HCT116 (cell line): ENCODE measurements at regions of chr1 and their contacts with region 1.

Region 1: DNA sequence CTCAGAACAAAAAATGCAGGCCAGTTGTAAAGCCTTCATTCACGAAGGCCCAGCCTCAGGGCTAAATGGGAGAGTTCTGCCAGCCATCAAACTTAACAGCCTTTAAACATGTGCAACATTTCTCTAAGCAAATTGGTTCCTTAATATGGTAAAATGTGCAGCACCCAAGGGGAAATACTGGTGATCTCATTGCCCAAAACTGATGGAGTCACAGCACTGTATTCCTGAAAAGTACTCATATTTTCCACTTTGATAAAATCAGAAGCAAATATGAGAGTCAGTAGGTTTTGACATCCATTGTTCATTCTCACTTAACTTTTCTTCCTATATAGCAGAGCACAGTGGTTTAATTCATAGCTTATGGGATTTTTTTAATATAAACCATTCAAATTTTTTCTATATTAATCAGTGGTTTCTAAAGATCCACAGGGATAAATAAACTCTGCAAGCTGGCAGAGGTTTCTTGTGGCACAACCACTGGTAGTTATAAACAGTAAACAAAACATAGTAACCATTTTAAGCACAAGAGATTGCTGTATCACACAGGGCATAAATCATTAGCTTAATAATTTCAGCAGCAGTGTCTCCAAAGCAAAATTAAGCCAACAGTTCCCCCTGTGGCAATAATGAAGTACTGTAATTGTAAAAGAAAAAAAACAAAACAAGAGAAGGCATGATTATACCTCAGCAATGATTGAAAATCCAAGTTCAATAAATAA is 106.9 kb upstream of the LYPLAL1 start:
- DNase-seq: peak; percentile 33
- ATAC-seq: peak; percentile 77
- H3K4me3 ChIP-seq: no peak overlapping the region
- H3K27ac ChIP-seq: no peak overlapping the region
- H3K4me1 ChIP-seq: peaks cover 0 to 8% of the 10 kb centered on the region in 2 experiments; a peak in 1 of 4 replicates
- H3K27me3 ChIP-seq: no peaks in the 10 kb centered on the region
- CTCF ChIP-seq: peak; percentile 38 to 66 (median 60); a peak in 4 of 6 replicates
- POLR2A ChIP-seq: no peak
- RAD21 ChIP-seq: peak; percentile 77

Region 2: DNA sequence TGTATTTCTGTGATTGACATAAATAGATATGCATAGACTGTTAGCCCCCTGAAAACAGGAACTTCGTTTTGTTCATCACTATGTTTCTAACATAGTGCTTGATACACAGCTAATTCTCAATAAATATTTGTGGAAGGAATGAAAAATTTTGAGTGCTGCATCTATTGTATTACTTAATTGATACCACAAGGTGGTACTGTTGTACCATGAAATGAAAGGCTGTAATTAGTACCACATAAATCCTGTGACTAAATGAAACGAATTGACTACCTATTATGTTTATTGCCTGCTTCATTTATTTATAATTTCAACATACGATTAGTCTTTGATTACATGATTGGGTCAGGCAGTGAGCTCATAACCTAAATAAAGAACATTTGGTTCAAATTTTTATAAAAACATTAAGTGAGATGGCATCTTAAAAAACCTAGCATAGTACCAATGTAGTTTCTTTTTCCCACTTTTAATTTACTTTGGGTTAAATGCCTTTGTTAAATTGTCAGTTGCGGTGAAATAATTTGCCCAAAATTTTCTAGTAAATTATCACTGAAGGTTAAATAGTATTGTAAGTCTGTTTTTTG is 736.7 kb before region 1 on chr1:
- CTCF ChIA-PET with region 1: interaction called, 12 read pairs
- POLR2A ChIA-PET with region 1: no interaction called
- RAD21 ChIA-PET with region 1: interaction called, 3 to 4 read pairs
- intact Hi-C with region 1: loop called (anchors 1 kb)
- DNase-seq: peak; percentile 31
- ATAC-seq: peak; percentile 69
- H3K4me3 ChIP-seq: no peak overlapping the region
- H3K27ac ChIP-seq: no peak overlapping the region; the same call in 1 of the 2 replicates
- H3K4me1 ChIP-seq: no peaks in the 10 kb centered on the region
- H3K27me3 ChIP-seq: no peaks in the 10 kb centered on the region
- CTCF ChIP-seq: peak in 2 of 3 experiments; percentile 63 to 80; a peak in 3 of 6 replicates
- POLR2A ChIP-seq: no peak
- RAD21 ChIP-seq: peak; percentile 86

Region 3: DNA sequence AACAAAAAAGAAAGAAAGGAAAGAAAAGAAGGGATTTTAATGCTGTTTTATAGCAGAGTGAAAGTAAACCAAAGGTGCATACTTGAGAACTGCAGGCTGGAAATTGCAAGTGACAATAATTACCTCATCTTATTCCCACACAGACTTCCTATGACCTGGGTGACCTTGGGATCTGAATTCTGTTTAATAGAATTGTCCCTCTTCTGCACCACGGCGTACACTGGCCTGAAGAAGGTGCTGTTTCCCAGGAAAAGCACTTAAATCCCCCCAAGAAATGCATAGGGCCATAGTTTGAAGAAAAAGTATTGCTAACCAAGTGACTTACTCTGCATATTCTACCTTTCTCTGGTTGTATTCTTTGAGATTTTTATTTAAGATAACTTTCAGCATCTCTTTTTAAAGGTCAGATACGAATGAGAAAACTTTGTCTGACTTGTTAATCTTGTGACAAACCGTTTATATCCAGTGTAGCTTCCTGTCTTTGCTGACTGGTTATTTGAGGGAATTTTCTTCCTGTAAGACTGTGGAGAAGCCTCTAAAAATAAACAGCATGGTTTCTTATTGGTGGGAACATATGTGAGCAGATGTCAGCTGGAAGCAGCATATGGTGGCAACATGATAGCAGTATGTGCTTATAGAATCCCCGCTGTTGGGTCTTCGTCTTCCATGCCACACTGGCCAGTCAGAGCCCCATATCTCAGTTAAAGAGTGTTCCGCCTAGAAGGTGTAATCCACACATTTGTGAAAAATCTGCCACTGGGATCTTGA is 705.3 kb before region 1 on chr1:
- CTCF ChIA-PET with region 1: interaction called, 5 read pairs
- POLR2A ChIA-PET with region 1: no interaction called
- RAD21 ChIA-PET with region 1: no interaction called
- intact Hi-C with region 1: loop called (anchors 1 kb)
- DNase-seq: peak; percentile 31
- ATAC-seq: peak; percentile 75
- H3K4me3 ChIP-seq: no peak overlapping the region
- H3K27ac ChIP-seq: no peak overlapping the region
- H3K4me1 ChIP-seq: no peaks in the 10 kb centered on the region; a peak in 1 of 4 replicates
- H3K27me3 ChIP-seq: no peaks in the 10 kb centered on the region
- CTCF ChIP-seq: peak; percentile 47 to 72 (median 53); a peak in 5 of 6 replicates
- POLR2A ChIP-seq: no peak
- RAD21 ChIP-seq: peak; percentile 82

Region 4: DNA sequence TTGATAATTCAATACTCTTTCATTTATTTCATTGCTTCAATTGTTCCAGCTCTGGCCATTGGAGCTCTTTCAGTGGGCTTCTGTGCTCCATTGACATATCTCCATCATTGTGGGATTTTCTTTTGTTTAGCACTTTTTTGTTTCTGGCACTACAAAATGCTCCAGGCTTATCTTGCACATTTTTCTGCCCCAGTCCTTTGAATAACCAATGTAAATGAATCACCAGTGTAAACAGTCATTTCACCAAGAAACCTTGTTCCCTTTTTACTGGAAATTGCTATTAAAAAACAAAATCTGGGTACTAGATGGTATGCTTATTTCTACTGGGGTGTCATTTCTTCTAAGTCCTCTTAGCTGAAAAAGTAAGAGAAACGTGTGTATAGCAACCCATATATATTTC is 66.2 kb before region 1 on chr1:
- CTCF ChIA-PET with region 1: no interaction called
- POLR2A ChIA-PET with region 1: no interaction called
- RAD21 ChIA-PET with region 1: no interaction called
- intact Hi-C with region 1: no loop called
- DNase-seq: no peak
- ATAC-seq: no peak
- H3K4me3 ChIP-seq: no peak overlapping the region
- H3K27ac ChIP-seq: no peak overlapping the region
- H3K4me1 ChIP-seq: no peaks in the 10 kb centered on the region
- H3K27me3 ChIP-seq: no peaks in the 10 kb centered on the region
- CTCF ChIP-seq: no peak
- POLR2A ChIP-seq: no peak
- RAD21 ChIP-seq: no peak

Region 5: DNA sequence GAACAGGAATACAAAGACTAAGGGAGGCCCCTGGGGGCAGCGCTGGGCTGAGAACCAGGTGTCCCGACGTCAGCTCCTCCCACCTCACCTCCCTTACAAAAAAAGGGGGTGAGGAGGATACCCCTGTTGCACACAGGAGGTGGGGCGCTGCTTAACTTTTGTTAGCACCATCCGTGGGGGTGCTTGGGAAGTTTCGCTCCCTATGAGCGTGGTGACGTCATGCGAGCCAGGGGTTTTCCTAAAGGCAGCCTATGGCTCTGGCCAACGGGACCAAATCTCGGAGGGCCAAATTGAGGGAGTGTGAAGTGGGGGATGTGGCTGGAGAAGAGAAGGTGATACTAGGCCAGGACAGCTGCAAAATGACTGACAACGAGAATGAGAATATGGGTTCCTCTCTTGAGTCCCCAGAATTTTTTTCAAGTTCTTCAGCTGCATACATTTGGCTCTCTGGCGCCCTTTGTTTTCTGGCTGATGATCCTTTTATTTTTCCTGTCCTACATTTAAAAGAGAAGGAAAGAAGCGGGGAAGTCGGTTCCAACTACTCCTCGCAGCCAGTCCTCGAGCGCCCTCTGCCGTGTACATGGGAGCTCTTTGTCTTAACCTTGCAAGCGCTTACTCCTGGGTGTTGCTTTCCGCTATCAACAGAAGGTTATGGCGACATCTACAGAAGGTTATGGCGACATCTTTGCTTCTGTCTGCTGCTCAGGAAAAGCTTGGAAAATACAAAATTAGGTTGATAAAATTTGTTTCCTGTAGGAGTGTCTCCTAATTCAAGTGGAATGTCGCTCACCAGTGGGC is 594.1 kb after region 1 on chr1:
- CTCF ChIA-PET with region 1: interaction called, 6 read pairs
- POLR2A ChIA-PET with region 1: no interaction called
- RAD21 ChIA-PET with region 1: no interaction called
- intact Hi-C with region 1: loop called (anchors 10 kb)
- DNase-seq: peak; percentile 87
- ATAC-seq: peak; percentile 97
- H3K4me3 ChIP-seq: peak overlapping the region in 1 of 2 experiments; percentile 23; a peak in 2 of 4 replicates
- H3K27ac ChIP-seq: no peak overlapping the region
- H3K4me1 ChIP-seq: peaks cover 4 to 6% of the 10 kb centered on the region in 2 experiments; a peak in 2 of 4 replicates
- H3K27me3 ChIP-seq: no peaks in the 10 kb centered on the region
- CTCF ChIP-seq: peak; percentile 87 to 94 (median 88)
- POLR2A ChIP-seq: no peak
- RAD21 ChIP-seq: peak; percentile 91